A549 (cell line): ENCODE measurements at regions of chr17 and their contacts with region 1.

Region 1: GRCh38 chr17:40075201-40075941 is 12.6 kb downstream of the THRA start:
- DNase-seq: peak in 1 of 2 experiments; percentile 75
- ATAC-seq: peak; percentile 6 to 43; a peak in 3 of 6 replicates
- H3K4me3 ChIP-seq: 0 out of 3 replicates have a peak overlapping the region, but pooled peaks have one; percentile 2
- H3K27ac ChIP-seq: peak overlapping the region; percentile 95
- H3K4me1 ChIP-seq: peaks cover 59% of the 10 kb centered on the region
- CTCF ChIP-seq: peak; percentile 97
- EP300 ChIP-seq: no peak
- POLR2A ChIP-seq: no peak
- RAD21 ChIP-seq: peak; percentile 73 to 85

Region 2: DNA sequence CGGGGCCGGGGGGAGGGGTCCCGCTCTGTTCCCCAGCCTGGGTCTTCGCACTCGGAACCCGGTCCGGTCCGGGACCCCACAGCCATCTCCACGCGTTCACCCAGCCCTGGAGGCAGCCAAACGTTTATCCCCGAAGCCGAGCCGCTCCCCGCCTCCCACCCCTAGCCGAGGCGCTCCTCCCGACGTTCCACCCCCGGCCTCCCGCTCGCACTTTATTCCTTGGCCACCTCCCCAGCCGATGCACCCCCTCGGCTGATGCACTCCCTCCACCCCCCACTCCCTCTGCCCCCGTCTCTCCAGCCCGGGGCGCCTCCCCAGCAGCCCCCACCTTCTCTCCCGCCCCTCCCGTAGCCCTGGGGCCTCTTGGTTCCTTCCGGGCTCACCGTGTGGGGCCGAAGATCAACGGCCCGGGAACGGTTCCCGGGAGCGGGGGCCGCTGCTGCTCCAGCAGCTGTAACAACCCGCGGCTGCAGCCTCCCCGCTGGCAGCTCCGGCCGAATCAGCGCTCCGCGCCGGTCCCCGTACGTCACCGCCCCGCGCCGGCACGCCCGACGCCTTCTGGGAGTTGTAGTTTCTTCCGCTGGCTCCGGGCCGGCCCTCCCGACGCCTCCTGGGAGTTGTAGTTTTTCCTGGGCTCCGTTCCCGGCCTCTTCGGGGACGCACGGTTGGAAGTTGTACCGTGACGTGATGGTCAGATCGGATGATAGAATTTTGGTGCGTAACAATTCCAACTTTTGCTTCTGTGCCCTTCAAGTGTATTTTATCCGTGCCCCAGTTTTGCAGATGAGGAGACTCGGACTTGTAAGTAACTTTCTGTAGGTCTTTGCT is 148.1 kb before region 1 on chr17 and contains the starts of genes LRRC3C and ORMDL3:
- CTCF ChIA-PET with region 1: no interaction called
- POLR2A ChIA-PET with region 1: no interaction called
- DNase-seq: peak; percentile 87 to 93
- ATAC-seq: peak; percentile 85 to 90
- H3K4me3 ChIP-seq: peak within 1 kb of the TSS; percentile 79
- H3K27ac ChIP-seq: peak within 1 kb of the TSS; percentile 79 to 93
- H3K4me1 ChIP-seq: peaks cover 41% of the 10 kb centered on the region
- CTCF ChIP-seq: no peak
- EP300 ChIP-seq: no peak
- POLR2A ChIP-seq: peak; percentile 80
- RAD21 ChIP-seq: no peak
- polyA plus RNA-seq, gene LRRC3C: not detected in 2 replicates
- polyA plus RNA-seq, gene ORMDL3: 26.9 and 49.0 TPM in 2 replicates

Region 3: GRCh38 chr17:39996800-39997199 is 78.6 kb before region 1 on chr17:
- CTCF ChIA-PET with region 1: interaction called, 10 read pairs
- POLR2A ChIA-PET with region 1: no interaction called
- DNase-seq: no peak
- ATAC-seq: no peak
- H3K4me3 ChIP-seq: no peak overlapping the region
- H3K27ac ChIP-seq: no peak overlapping the region
- H3K4me1 ChIP-seq: no peaks in the 10 kb centered on the region
- CTCF ChIP-seq: no peak
- EP300 ChIP-seq: no peak
- POLR2A ChIP-seq: no peak
- RAD21 ChIP-seq: no peak

Region 4: GRCh38 chr17:40038882-40039513 is 36.4 kb before region 1 on chr17:
- CTCF ChIA-PET with region 1: interaction called, 140 read pairs
- POLR2A ChIA-PET with region 1: no interaction called
- DNase-seq: peak; percentile 56 to 68
- ATAC-seq: peak; percentile 80 to 88
- H3K4me3 ChIP-seq: no peak overlapping the region
- H3K27ac ChIP-seq: peak overlapping the region in 1 of 2 experiments; percentile 25; a peak in 1 of 6 replicates
- H3K4me1 ChIP-seq: 0 out of 3 replicates have a peak, but pooled peaks cover 7% of the 10 kb centered on the region
- CTCF ChIP-seq: peak; percentile 67
- EP300 ChIP-seq: no peak
- POLR2A ChIP-seq: no peak
- RAD21 ChIP-seq: peak; percentile 54 to 63

Region 5: GRCh38 chr17:40107522-40108174 is 32.3 kb after region 1 on chr17:
- CTCF ChIA-PET with region 1: interaction called, 390 read pairs
- POLR2A ChIA-PET with region 1: interaction called, 4 read pairs
- DNase-seq: no peak
- ATAC-seq: no peak
- H3K4me3 ChIP-seq: no peak overlapping the region
- H3K27ac ChIP-seq: peak overlapping the region; percentile 29 to 70; a peak in 5 of 6 replicates
- H3K4me1 ChIP-seq: peaks cover 65% of the 10 kb centered on the region
- CTCF ChIP-seq: no peak
- EP300 ChIP-seq: no peak
- POLR2A ChIP-seq: no peak
- RAD21 ChIP-seq: no peak

Region 6: GRCh38 chr17:40278414-40278813 is 203.0 kb after region 1 on chr17:
- CTCF ChIA-PET with region 1: no interaction called
- POLR2A ChIA-PET with region 1: no interaction called
- DNase-seq: no peak
- ATAC-seq: no peak
- H3K4me3 ChIP-seq: no peak overlapping the region
- H3K27ac ChIP-seq: no peak overlapping the region
- H3K4me1 ChIP-seq: peaks cover 8% of the 10 kb centered on the region
- CTCF ChIP-seq: no peak
- EP300 ChIP-seq: no peak
- POLR2A ChIP-seq: no peak
- RAD21 ChIP-seq: no peak